ENCODE measurements at regions of chr7 and their contacts with region 1.

Region 1: DNA sequence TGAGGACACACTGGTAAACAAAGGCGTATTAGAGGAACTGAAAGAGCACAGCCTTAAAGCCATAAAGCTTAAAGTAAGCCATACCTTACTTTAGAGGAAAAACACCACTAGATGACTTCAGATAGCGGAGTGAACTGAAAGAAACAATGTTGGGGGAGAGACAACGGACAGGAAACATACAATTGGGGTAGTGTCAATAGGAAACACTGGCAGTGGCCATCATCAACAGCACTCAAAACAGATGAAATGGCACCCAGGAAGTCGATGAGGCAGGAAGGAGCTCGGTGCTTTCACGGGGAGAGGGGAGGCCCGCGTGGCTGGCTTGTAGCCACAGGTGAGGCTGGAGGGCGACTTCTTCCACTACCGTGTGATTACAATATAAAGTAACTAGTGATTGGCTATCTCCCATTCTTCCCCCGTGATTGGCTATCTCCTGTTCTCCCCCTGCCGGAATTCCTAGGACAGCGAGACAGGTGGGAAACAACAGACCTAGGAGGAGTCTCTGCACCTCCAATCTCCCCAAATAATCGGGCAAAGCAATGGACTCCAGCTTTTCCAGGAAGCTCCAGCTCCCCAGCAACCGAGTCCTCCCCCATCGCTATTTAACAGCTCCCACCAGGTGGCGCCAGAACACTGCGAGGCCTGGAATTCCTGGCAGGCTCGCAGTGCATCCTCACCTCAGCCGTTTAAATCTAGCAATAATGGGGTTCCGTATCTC is 2.4 kb upstream of the TAS2R38 start:
- DNase-seq: peak; percentile 90
- H3K4me3 Mint-ChIP-seq: peak overlapping the region; percentile 64
- H3K27ac Mint-ChIP-seq: peak overlapping the region; percentile 43
- H3K4me1 Mint-ChIP-seq: peaks cover 10% of the 10 kb centered on the region
- H3K27me3 Mint-ChIP-seq: peaks cover 15% of the 10 kb centered on the region
- CTCF ChIP-seq: peak; percentile 91

Region 2: DNA sequence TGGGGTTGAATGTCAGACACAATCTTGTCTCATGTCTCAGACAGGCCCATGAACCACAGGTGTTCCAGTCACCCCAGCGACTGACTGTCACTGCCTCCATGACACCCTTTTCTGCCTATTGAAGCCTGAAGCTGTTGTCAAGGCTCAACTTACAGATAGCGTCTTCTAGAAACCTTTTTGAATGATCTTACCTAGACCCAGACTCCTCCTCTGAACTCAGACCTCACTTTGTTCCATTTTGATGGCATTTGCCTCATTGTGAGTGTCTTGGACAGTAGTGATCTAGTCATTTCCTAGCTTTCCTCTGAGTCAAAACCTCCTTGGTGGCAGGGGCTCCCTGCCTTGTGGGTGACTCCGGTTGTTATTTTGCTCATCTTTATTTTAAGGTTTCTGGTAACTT is 523.1 kb before region 1 on chr7:
- CTCF ChIA-PET with region 1: no interaction called
- intact Hi-C with region 1: no loop called
- DNase-seq: no peak
- H3K4me3 Mint-ChIP-seq: no peak overlapping the region
- H3K27ac Mint-ChIP-seq: no peak overlapping the region
- H3K4me1 Mint-ChIP-seq: no peaks in the 10 kb centered on the region
- H3K27me3 Mint-ChIP-seq: peaks cover 13% of the 10 kb centered on the region
- CTCF ChIP-seq: no peak

Region 3: DNA sequence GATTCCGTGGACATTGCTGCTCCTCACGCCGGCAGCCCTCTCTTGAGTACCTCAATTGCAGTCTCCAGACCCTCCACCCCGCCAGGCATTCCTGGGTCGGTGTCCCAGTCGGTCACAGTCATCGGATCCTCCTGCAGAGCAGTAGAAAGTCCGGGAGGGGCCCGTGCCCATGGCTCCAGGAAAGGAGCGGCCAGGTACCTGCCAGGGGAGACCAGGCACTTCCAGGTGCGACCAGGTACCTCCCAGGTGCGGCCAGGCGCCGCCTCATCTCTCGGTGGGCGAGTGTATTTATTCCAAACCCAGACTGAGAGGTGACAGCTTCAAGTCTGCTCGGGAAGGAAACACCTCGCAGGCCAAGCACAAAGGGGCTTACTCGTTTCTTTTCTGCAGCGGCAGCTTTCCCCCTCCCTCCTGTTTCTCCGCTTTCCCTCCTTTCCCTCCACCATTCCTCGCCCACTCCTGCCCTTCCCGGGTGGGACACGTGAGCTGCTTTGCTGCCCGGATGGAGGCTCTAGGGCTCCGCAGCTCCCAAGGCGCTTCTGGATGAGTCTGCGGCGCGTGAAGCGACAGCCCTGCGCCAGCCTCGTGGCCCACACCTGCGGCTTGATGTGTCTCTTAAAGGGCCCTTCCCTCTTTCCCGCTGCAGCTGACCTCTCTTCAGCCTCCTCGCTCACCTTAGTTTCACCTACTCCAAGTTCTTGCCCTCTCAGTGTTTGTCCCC is 464.1 kb before region 1 on chr7:
- CTCF ChIA-PET with region 1: no interaction called
- intact Hi-C with region 1: no loop called
- DNase-seq: peak; percentile 27
- H3K4me3 Mint-ChIP-seq: peak overlapping the region; percentile 71
- H3K27ac Mint-ChIP-seq: no peak overlapping the region
- H3K4me1 Mint-ChIP-seq: peaks cover 12% of the 10 kb centered on the region
- H3K27me3 Mint-ChIP-seq: peaks cover 67% of the 10 kb centered on the region
- CTCF ChIP-seq: no peak

Region 4: GRCh38 chr7:142030294-142030693 is 54.3 kb after region 1 on chr7:
- CTCF ChIA-PET with region 1: interaction called, 5 read pairs
- intact Hi-C with region 1: loop called (anchors 2 kb)
- DNase-seq: no peak
- H3K4me3 Mint-ChIP-seq: no peak overlapping the region
- H3K27ac Mint-ChIP-seq: no peak overlapping the region
- H3K4me1 Mint-ChIP-seq: no peaks in the 10 kb centered on the region
- H3K27me3 Mint-ChIP-seq: no peaks in the 10 kb centered on the region
- CTCF ChIP-seq: no peak

Region 5: GRCh38 chr7:142134909-142135308 is 158.9 kb after region 1 on chr7:
- CTCF ChIA-PET with region 1: interaction called, 6 read pairs
- intact Hi-C with region 1: loop called (anchors 5 kb)
- DNase-seq: peak; percentile 41
- H3K4me3 Mint-ChIP-seq: peak overlapping the region; percentile 26
- H3K27ac Mint-ChIP-seq: peak overlapping the region; percentile 21
- H3K4me1 Mint-ChIP-seq: peaks cover 49% of the 10 kb centered on the region
- H3K27me3 Mint-ChIP-seq: no peaks in the 10 kb centered on the region
- CTCF ChIP-seq: no peak

Region 6: GRCh38 chr7:142188846-142189245 is 212.9 kb after region 1 on chr7:
- CTCF ChIA-PET with region 1: interaction called, 3 read pairs
- intact Hi-C with region 1: loop called (anchors 1 kb)
- DNase-seq: no peak
- H3K4me3 Mint-ChIP-seq: no peak overlapping the region
- H3K27ac Mint-ChIP-seq: no peak overlapping the region
- H3K4me1 Mint-ChIP-seq: peaks cover 19% of the 10 kb centered on the region
- H3K27me3 Mint-ChIP-seq: no peaks in the 10 kb centered on the region
- CTCF ChIP-seq: no peak

Region 7: GRCh38 chr7:142482891-142483658 is 507.1 kb after region 1 on chr7:
- CTCF ChIA-PET with region 1: interaction called, 5 read pairs
- intact Hi-C with region 1: loop called (anchors 5 kb)
- DNase-seq: peak; percentile 72
- H3K4me3 Mint-ChIP-seq: no peak overlapping the region
- H3K27ac Mint-ChIP-seq: no peak overlapping the region
- H3K4me1 Mint-ChIP-seq: peaks cover 6% of the 10 kb centered on the region
- H3K27me3 Mint-ChIP-seq: peaks cover 56% of the 10 kb centered on the region
- CTCF ChIP-seq: peak; percentile 55

Measured in Calu3 (cell line).